ENCODE measurements at regions of chr9 and their contacts with region 1.

Region 1: GRCh38 chr9:21395778-21396717 is 10.8 kb upstream of the IFNA2 start:
- DNase-seq: peak in 1 of 2 experiments; percentile 87
- H3K4me3 ChIP-seq: peak overlapping the region; percentile 23 to 57 (median 34); a peak in 6 of 8 replicates
- H3K27ac ChIP-seq: no peak overlapping the region
- H3K4me1 ChIP-seq: no peaks in the 10 kb centered on the region
- H3K27me3 ChIP-seq: peaks cover 0 to 8% (median 4%) of the 10 kb centered on the region in 4 experiments; a peak in 3 of 7 replicates
- CTCF ChIP-seq: peak; percentile 88 to 98 (median 93)
- EP300 ChIP-seq: no peak
- POLR2A ChIP-seq: no peak
- RAD21 ChIP-seq: peak; percentile 61 to 72

Region 2: DNA sequence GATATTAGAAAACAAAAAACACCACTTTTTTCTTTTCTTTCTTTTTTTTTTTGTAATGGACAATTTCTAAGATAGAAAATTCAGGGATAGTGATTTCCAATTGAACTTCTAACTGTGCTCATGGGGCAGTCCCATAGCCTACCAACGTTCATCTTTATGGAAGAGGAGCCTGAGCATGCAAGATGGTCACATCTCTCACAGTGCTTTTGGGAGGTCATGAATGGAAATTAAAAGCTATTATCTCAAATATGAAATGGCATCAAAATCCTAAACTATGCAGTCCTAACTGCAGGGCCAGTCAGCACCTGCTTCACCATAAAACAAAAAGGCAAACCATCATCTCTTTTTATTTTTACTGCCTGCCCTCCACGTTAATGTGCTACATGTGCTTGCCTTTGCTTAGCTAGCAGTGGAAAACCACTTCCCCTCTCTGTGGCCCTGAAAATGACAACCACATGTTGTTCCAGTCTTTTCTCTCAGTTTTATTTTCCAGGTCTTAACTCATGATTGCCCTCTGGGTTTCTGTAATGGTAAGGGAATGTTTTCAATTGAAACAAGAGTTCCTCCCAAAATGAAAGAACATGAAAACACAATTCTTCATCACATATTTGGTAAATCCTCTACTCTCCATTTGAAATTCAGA is 335.0 kb before region 1 on chr9:
- CTCF ChIA-PET with region 1: no interaction called
- POLR2A ChIA-PET with region 1: no interaction called
- DNase-seq: no peak
- H3K4me3 ChIP-seq: no peak overlapping the region
- H3K27ac ChIP-seq: no peak overlapping the region
- H3K4me1 ChIP-seq: no peaks in the 10 kb centered on the region
- H3K27me3 ChIP-seq: no peaks in the 10 kb centered on the region
- CTCF ChIP-seq: no peak
- EP300 ChIP-seq: no peak
- POLR2A ChIP-seq: no peak
- RAD21 ChIP-seq: 0 out of 4 replicates have a peak, but pooled peaks of 1 of the 2 experiments have one; percentile 3

Region 3: GRCh38 chr9:21252721-21253547 is 143.1 kb before region 1 on chr9:
- CTCF ChIA-PET with region 1: interaction called, 12 read pairs
- POLR2A ChIA-PET with region 1: no interaction called
- DNase-seq: no peak
- H3K4me3 ChIP-seq: no peak overlapping the region
- H3K27ac ChIP-seq: no peak overlapping the region
- H3K4me1 ChIP-seq: peaks cover 0 to 7% (median 3%) of the 10 kb centered on the region in 4 experiments; a peak in 3 of 7 replicates
- H3K27me3 ChIP-seq: no peaks in the 10 kb centered on the region; a peak in 1 of 7 replicates
- CTCF ChIP-seq: peak in 2 of 3 experiments; percentile 33 to 56; a peak in 2 of 4 replicates
- EP300 ChIP-seq: no peak
- POLR2A ChIP-seq: no peak
- RAD21 ChIP-seq: peak; percentile 59 to 62

Region 4: GRCh38 chr9:21326526-21327139 is 69.4 kb before region 1 on chr9:
- CTCF ChIA-PET with region 1: interaction called, 79 read pairs
- POLR2A ChIA-PET with region 1: no interaction called
- DNase-seq: no peak
- H3K4me3 ChIP-seq: no peak overlapping the region
- H3K27ac ChIP-seq: no peak overlapping the region
- H3K4me1 ChIP-seq: no peaks in the 10 kb centered on the region
- H3K27me3 ChIP-seq: no peaks in the 10 kb centered on the region
- CTCF ChIP-seq: peak in 2 of 3 experiments; percentile 53 to 62; a peak in 2 of 4 replicates
- EP300 ChIP-seq: no peak
- POLR2A ChIP-seq: no peak
- RAD21 ChIP-seq: peak; percentile 84 to 87

Region 5: GRCh38 chr9:21340735-21341134 is 55.3 kb before region 1 on chr9:
- CTCF ChIA-PET with region 1: interaction called, 79 read pairs
- POLR2A ChIA-PET with region 1: no interaction called
- DNase-seq: no peak
- H3K4me3 ChIP-seq: no peak overlapping the region
- H3K27ac ChIP-seq: no peak overlapping the region
- H3K4me1 ChIP-seq: no peaks in the 10 kb centered on the region
- H3K27me3 ChIP-seq: no peaks in the 10 kb centered on the region
- CTCF ChIP-seq: no peak
- EP300 ChIP-seq: no peak
- POLR2A ChIP-seq: no peak
- RAD21 ChIP-seq: no peak

Region 6: DNA sequence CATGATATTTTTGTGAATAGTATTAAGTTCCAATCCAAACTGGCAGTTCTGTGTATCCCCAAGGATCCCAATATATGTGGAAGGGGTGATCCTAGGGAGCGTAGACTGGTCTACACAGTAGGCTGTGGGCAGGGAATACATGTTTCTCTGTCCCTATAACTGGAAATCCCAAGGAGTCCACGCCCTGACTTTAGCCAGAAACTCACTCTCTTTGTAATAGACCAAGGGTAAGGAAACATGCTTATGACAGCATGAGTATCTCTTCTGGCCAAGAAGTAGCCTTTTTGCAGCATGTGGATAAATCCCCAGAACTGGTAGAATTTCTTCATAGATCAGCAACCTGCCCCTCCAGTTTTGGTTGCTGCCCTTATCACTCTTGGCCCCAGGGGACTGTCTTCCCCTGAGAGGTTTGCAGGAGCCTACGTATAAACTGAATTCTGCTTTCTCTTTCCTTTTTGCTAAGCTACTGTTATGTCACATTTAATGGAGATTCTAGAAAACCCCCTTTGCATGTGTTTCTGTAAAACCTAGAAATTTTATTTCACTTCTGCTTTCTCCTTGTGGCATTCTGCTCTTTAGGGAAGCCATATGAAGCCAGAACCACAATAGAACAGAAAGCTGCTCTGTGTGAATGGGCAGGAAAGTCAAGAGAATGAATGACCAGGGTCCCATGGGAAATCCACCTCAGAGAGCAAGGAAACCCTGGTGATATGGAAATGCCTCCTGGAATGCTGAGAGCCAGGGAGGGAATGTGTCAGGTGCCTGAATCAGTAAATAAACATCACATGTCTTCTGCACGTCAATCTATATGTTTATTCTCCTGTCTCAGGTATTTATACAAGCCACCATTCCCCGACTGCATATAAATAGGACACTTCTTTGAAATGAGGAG is 14.4 kb before region 1 on chr9:
- CTCF ChIA-PET with region 1: interaction called, 27 read pairs
- POLR2A ChIA-PET with region 1: no interaction called
- DNase-seq: no peak
- H3K4me3 ChIP-seq: no peak overlapping the region
- H3K27ac ChIP-seq: no peak overlapping the region
- H3K4me1 ChIP-seq: peaks cover 3 to 9% (median 5%) of the 10 kb centered on the region in 4 experiments; a peak in 4 of 7 replicates
- H3K27me3 ChIP-seq: no peaks in the 10 kb centered on the region
- CTCF ChIP-seq: no peak
- EP300 ChIP-seq: no peak; a peak in 1 of 3 replicates
- POLR2A ChIP-seq: no peak
- RAD21 ChIP-seq: no peak

Region 7: DNA sequence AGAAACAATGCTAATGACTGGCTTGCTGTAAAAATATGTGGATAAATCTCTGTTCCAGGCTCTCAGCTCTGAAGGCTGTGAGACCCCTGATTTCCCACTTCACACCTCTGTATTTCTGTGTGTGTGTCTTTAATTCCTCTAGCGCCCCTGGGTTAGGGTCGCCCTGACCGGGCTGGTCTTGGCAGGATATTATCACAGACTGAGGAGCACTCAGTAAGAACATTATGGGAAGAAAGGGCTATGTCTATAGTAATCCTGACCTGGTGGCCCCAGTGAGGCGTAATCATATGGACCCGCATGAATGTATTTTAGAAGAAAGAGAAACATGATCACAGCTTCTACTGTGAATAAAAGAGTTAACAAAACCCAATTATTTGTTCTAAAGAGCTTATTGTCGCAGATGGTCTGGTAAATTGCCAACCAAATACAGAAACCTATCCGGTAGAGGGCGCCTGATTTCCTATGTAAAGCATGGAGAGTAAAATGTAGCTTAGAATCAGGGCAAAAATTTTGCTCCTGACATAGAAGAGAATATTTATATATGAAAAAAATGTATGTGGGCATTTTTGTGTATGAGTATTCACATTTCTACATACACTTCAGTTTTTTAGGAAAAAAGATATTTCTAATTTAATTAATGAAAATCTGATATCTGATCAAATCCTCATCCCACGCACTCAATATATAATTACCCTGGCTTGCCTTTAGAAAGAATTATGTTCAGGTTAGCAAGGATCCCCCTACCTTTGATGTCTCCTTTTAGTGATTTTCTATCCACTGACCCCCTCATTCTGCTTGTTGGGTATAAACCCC is 38.4 kb after region 1 on chr9:
- CTCF ChIA-PET with region 1: interaction called, 15 read pairs
- POLR2A ChIA-PET with region 1: no interaction called
- DNase-seq: peak in 1 of 2 experiments; percentile 66
- H3K4me3 ChIP-seq: no peak overlapping the region
- H3K27ac ChIP-seq: no peak overlapping the region
- H3K4me1 ChIP-seq: no peaks in the 10 kb centered on the region
- H3K27me3 ChIP-seq: no peaks in the 10 kb centered on the region
- CTCF ChIP-seq: peak in 2 of 3 experiments; percentile 47; a peak in 2 of 4 replicates
- EP300 ChIP-seq: no peak
- POLR2A ChIP-seq: no peak
- RAD21 ChIP-seq: peak; percentile 31 to 46; a peak in 3 of 4 replicates